GM23248 (cell line): ENCODE measurements at regions of chr18 and their contacts with region 1.

Region 1: GRCh38 chr18:44130376-44130942 is 550.2 kb upstream of the SETBP1 start:
- DNase-seq: peak; percentile 49
- H3K4me3 ChIP-seq: no peak overlapping the region
- H3K27ac ChIP-seq: no peak overlapping the region
- H3K4me1 ChIP-seq: peaks cover 24% of the 10 kb centered on the region
- H3K27me3 ChIP-seq: no peaks in the 10 kb centered on the region

Region 2: GRCh38 chr18:44651453-44651852 is 521.0 kb after region 1 on chr18:
- in situ Hi-C with region 1: loop called (anchors 25 kb)
- DNase-seq: peak; percentile 78
- H3K4me3 ChIP-seq: no peak overlapping the region
- H3K27ac ChIP-seq: no peak overlapping the region
- H3K4me1 ChIP-seq: peaks cover 24% of the 10 kb centered on the region
- H3K27me3 ChIP-seq: no peaks in the 10 kb centered on the region

Region 3: DNA sequence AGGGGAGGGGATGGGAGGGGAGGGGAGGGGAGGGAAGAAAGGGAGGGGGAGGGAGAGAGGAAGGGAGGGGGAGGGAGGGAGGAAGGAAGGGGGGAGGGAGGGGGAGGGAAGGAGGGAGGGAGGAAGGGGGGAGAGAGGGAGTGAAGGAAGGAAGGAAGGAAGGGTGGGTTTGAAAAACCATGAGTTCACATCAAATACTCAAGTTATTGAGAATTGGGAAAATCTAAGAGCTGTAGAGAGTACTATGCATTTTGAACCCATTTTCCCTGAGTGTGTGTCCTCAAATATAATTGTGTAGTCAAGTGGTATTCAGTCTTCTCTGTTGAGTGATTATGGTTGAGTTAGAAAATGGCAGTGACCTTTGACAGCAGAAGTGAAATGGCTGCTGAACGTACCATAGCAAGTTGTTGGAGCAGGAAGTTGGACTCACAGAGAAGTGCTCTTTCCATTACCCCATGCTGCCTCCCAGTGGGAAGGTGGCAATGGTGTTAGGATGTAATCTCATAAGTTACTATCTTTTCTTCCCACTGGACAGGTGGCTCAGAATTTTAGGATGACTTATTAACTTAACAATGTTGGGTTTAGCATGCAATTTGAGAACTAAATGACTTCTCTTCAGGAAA is 764.8 kb after region 1 on chr18:
- in situ Hi-C with region 1: loop called (anchors 25 kb)
- DNase-seq: peak; percentile 52
- H3K4me3 ChIP-seq: no peak overlapping the region
- H3K27ac ChIP-seq: no peak overlapping the region
- H3K4me1 ChIP-seq: peaks cover 19% of the 10 kb centered on the region
- H3K27me3 ChIP-seq: no peaks in the 10 kb centered on the region

Region 4: DNA sequence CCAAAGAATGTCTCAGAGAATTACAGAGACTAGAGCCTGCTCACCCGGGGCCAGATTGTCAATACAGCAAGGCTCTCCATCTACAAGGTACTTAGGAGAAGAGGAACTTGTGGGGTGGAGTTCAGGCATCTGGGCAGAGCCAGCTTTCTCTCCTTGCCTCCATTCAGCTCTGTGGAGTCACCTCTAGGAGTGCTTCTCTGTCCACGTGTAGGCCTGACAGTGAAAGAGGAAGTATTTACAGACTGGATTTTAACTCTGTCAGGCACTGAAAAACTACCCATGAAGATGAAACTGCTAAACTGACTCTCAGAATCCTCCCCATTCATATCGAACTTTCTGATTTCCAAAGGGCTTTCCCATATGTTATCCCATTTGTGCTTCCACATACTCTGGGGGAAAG is 865.8 kb after region 1 on chr18:
- in situ Hi-C with region 1: loop called (anchors 25 kb)
- DNase-seq: no peak
- H3K4me3 ChIP-seq: no peak overlapping the region
- H3K27ac ChIP-seq: no peak overlapping the region
- H3K4me1 ChIP-seq: no peaks in the 10 kb centered on the region
- H3K27me3 ChIP-seq: no peaks in the 10 kb centered on the region